PC-3 (cell line): ENCODE measurements at regions of chr6 and their contacts with region 1.

Region 1: GRCh38 chr6:55636405-55637102 is 57.6 kb upstream of the HMGCLL1 start:
- DNase-seq: peak; percentile 96
- ATAC-seq: peak; percentile 99
- H3K4me3 ChIP-seq: peak overlapping the region; percentile 2; the same call in 1 of the 2 replicates
- H3K27ac ChIP-seq: peak overlapping the region; percentile 86
- H3K4me1 ChIP-seq: peaks cover 28% of the 10 kb centered on the region
- H3K27me3 ChIP-seq: no peaks in the 10 kb centered on the region
- CTCF ChIP-seq: no peak

Region 2: DNA sequence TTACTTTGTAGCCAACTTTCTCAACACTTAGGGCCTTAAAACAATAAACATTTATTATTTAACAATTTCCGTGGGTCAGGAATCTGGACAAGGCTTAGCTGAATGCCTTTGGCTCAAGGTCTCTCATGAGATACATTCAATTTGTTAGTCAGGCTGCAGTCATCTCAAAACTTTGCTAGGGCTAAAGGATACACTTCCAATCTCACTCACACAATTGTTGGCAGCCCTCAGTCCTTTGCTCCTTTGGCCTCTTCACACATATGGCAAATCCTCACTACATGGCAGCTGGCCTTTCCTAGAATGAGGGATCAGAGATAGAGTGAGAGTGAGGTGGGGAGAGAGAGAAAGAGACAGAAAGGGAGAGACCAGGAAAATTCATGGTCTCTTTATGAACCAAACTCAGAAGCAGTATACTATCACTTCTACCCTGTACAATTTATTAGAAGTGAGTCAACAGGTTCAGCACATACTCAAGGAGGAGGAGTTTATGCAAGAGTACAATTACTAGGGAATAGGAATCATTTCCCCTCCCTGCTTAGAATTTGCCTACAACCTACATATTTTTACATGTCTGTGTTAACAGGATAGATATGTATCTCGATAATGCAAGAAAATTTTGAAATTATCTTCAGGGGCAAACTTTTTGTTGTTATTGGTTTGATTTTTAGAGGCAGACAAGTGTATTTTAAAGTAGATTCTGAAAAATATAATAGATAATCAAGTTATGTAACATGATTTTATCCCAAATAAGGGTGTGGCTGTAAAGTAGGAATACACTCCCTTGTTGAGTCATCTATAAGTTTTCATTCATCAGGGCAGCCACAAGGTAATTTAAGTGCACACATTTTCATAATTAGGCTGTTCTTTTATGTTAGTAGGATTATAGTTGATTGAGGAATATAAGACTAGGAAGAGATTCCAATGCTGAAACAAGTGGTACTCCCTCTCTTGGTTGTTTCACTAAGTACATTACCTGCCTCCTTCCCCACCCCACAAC is 28.3 kb after region 1 on chr6:
- CTCF ChIA-PET with region 1: no interaction called
- POLR2A ChIA-PET with region 1: no interaction called
- intact Hi-C with region 1: loop called (anchors 2 kb)
- DNase-seq: peak; percentile 72
- ATAC-seq: peak; percentile 99
- H3K4me3 ChIP-seq: peak overlapping the region; percentile 13; the same call in 1 of the 2 replicates
- H3K27ac ChIP-seq: peak overlapping the region; percentile 85
- H3K4me1 ChIP-seq: peaks cover 15% of the 10 kb centered on the region
- H3K27me3 ChIP-seq: no peaks in the 10 kb centered on the region
- CTCF ChIP-seq: no peak

Region 3: GRCh38 chr6:55758156-55758888 is 121.8 kb after region 1 on chr6:
- CTCF ChIA-PET with region 1: no interaction called
- POLR2A ChIA-PET with region 1: no interaction called
- intact Hi-C with region 1: loop called (anchors 10 kb)
- DNase-seq: peak; percentile 97
- ATAC-seq: peak; percentile 99
- H3K4me3 ChIP-seq: no peak overlapping the region
- H3K27ac ChIP-seq: peak overlapping the region; percentile 85
- H3K4me1 ChIP-seq: peaks cover 37% of the 10 kb centered on the region
- H3K27me3 ChIP-seq: no peaks in the 10 kb centered on the region
- CTCF ChIP-seq: no peak

Region 4: GRCh38 chr6:55794136-55794812 is 157.7 kb after region 1 on chr6:
- CTCF ChIA-PET with region 1: no interaction called
- POLR2A ChIA-PET with region 1: interaction called, 3 read pairs
- intact Hi-C with region 1: loop called (anchors 10 kb)
- DNase-seq: peak; percentile 78
- ATAC-seq: peak; percentile 72
- H3K4me3 ChIP-seq: no peak overlapping the region
- H3K27ac ChIP-seq: peak overlapping the region; percentile 65
- H3K4me1 ChIP-seq: peaks cover 27% of the 10 kb centered on the region
- H3K27me3 ChIP-seq: no peaks in the 10 kb centered on the region
- CTCF ChIP-seq: no peak

Region 5: DNA sequence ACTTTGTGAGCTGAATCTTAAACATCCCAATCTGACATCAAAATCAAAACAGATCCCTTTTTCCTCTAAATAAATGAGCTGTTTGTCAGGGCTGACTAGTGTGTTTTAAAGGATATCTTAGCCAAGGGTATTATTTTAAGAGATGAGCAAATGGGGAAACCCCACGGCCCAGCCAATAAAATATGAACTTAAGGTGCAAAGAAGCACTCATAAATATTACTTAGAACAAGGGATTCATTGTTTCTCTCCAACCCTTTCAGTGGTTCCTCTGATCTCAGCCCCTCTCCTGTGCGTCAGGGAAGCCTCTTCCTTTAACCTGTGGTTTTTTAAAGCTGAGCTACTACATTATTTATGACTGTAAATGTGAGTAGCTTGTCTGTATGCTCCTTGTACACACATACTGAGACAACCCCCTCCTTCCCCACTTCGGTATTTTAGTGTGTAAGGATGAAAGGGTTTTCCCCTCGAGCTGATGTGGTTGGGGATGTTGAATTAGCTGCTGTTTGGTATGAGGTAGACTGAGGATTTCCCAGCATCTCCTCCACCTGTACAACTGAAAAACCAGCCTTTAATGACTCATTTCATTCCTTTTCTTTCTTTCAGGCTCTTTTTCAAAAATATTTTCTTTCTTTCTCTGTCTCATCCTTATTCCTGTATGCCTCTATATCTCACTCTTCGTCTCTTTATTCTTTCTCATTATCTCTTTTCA is 232.4 kb after region 1 on chr6:
- CTCF ChIA-PET with region 1: no interaction called
- POLR2A ChIA-PET with region 1: no interaction called
- intact Hi-C with region 1: loop called (anchors 5 kb)
- DNase-seq: peak; percentile 98
- ATAC-seq: peak; percentile 93
- H3K4me3 ChIP-seq: peak overlapping the region; percentile 30; the same call in 1 of the 2 replicates
- H3K27ac ChIP-seq: peak overlapping the region; percentile 97
- H3K4me1 ChIP-seq: peaks cover 60% of the 10 kb centered on the region
- H3K27me3 ChIP-seq: no peaks in the 10 kb centered on the region
- CTCF ChIP-seq: no peak

Region 6: GRCh38 chr6:56347526-56347925 is 711.0 kb after region 1 on chr6:
- CTCF ChIA-PET with region 1: no interaction called
- POLR2A ChIA-PET with region 1: interaction called, 22 read pairs
- intact Hi-C with region 1: no loop called
- DNase-seq: peak; percentile 58
- ATAC-seq: no peak
- H3K4me3 ChIP-seq: no peak overlapping the region
- H3K27ac ChIP-seq: no peak overlapping the region
- H3K4me1 ChIP-seq: peaks cover 24% of the 10 kb centered on the region
- H3K27me3 ChIP-seq: no peaks in the 10 kb centered on the region
- CTCF ChIP-seq: no peak